HEK293 (cell line): ENCODE measurements at regions of chr22 and their contacts with region 1.

Region 1: DNA sequence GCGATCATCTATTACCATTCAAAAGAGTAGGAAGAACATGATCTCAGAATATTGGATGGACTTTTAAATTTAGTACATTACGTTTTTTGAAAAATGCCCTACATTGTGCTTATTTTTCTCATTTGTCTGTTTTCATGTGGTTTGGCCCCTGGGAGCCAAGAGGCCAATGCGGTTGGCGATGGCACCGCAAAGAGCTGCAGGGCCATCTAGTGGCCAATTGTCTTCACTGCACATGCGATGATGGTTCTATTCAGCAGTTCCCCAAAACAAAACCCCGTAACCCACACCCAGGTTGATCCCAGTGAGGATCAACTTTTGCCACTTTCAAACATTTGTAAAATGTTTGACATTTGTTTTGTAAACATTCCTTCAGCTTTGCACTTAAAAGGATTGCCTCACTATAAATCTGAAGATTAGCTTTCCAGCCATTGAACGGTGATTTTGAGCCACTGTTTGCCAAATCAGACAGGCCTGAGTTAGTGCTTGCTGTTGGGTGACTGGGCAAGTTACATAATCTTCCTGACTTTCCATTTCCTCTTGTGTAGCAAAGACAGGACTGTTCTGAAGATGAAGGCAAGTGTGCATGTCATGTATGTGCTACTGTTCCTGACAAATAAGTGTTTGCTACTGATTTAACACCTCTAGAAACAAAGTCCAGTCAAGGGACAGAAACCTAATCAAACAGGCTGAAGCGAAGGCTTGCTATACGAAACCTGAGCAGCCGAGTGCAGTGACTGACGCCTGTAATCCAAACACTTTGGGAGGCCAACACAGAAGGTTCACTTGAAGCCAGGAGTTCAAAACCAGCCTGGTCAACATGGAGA is 29.2 kb upstream of the XBP1 start:
- H3K4me3 ChIP-seq: no peak overlapping the region
- H3K27ac ChIP-seq: no peak overlapping the region
- H3K4me1 ChIP-seq: no peaks in the 10 kb centered on the region
- CTCF ChIP-seq: peak; percentile 87

Region 2: DNA sequence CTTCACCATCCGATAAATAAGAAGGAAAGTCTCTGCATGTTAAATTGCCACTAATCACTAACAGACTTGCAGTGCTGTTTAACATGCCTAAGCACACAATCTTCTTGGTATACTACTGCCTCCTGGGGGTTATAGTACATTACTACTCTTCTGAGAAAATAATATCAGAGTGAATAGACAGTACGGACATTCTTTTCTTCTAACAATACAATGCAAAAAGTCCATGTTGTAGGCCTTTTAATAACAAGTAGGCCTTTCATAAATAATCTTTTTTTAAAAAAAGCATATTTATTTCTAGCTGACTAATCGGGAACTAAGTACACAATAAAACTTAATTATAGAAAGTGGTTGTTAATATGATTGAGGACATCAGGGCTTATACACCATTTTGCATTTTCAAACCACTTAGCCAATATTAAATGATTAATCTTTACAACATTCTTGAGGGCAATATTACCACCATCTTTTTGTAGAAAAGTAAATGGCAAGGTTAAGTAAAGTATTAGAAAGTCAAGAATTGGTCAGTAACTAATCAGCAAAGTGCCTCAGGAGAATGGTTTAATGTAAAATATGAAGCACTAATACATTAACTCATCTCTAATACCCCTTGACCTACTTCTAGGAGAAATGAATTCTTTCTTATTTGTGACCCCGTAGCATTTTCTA is 234.6 kb before region 1 on chr22:
- CTCF ChIA-PET with region 1: interaction called, 131 read pairs
- POLR2A ChIA-PET with region 1: no interaction called
- H3K4me3 ChIP-seq: no peak overlapping the region
- H3K27ac ChIP-seq: no peak overlapping the region
- H3K4me1 ChIP-seq: peaks cover 5% of the 10 kb centered on the region
- CTCF ChIP-seq: peak; percentile 56; the same call in 1 of the 2 replicates

Region 3: DNA sequence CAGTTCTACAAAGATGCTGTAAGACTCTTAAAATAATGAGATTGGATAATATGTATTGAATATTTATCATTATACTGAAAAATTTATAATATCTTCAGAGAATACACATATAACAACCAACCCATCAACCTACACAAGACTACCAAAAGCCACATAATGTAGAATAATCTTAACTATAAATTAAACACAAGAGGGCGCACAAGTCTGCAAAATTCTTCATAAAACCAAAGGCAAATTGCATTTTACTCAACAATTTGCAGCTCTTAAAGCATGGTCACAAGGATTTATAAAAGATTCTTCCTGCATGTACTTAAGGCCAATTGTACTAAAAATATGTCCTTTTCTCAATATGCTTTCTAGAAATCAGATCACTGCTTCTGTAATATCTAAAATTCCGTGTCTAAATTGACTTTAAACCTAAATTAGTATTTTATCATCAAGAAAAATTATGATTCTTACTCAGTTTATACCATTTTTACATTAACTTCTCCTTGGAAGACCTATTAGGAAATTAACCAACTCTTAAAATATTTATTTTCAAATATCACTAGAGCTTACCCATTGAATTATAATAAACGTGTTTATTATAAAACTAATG is 228.9 kb before region 1 on chr22:
- CTCF ChIA-PET with region 1: interaction called, 131 read pairs
- POLR2A ChIA-PET with region 1: no interaction called
- H3K4me3 ChIP-seq: no peak overlapping the region
- H3K27ac ChIP-seq: no peak overlapping the region
- H3K4me1 ChIP-seq: no peaks in the 10 kb centered on the region
- CTCF ChIP-seq: no peak

Region 4: GRCh38 chr22:28607795-28608194 is 221.8 kb before region 1 on chr22:
- CTCF ChIA-PET with region 1: interaction called, 27 read pairs
- POLR2A ChIA-PET with region 1: no interaction called
- H3K4me3 ChIP-seq: no peak overlapping the region
- H3K27ac ChIP-seq: no peak overlapping the region
- H3K4me1 ChIP-seq: no peaks in the 10 kb centered on the region
- CTCF ChIP-seq: no peak

Region 5: GRCh38 chr22:28791841-28792490 is 37.6 kb before region 1 on chr22:
- CTCF ChIA-PET with region 1: interaction called, 21 read pairs
- POLR2A ChIA-PET with region 1: no interaction called
- H3K4me3 ChIP-seq: no peak overlapping the region
- H3K27ac ChIP-seq: peak overlapping the region; percentile 40; the same call in 1 of the 2 replicates
- H3K4me1 ChIP-seq: no peaks in the 10 kb centered on the region; the same call in 1 of the 2 replicates
- CTCF ChIP-seq: no peak

Region 6: DNA sequence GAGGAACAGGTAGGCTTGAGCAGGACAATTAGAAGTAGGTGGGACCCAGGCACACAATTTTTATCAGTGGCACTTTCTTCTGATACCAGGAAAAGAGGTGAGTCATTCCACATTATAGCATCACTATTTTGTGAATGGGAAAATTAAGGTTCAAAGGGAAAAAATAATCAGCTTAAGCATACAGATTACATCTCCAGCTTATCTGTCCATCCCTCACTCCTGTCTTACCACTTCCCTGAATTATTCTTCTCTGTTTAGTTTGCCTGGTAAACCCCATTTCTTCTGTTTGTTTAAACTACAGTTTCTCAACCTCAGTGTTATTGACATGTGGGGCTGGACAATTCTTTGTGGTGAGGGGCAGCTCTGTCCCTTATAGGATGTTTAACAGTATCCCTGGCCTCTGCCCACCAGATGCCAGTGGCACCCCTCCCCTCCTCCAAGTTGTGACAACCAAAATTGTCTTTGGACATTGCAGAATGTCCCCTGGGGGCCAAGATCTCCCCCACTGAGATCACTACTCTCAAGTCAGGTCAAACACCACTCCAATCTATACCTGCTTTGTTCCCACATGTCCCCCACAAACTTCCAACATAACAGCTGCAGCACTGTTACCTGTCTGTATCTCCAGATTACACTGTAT is 20.7 kb before region 1 on chr22:
- CTCF ChIA-PET with region 1: interaction called, 15 read pairs
- POLR2A ChIA-PET with region 1: interaction called, 3 read pairs
- H3K4me3 ChIP-seq: no peak overlapping the region
- H3K27ac ChIP-seq: no peak overlapping the region
- H3K4me1 ChIP-seq: no peaks in the 10 kb centered on the region
- CTCF ChIP-seq: no peak

Region 7: DNA sequence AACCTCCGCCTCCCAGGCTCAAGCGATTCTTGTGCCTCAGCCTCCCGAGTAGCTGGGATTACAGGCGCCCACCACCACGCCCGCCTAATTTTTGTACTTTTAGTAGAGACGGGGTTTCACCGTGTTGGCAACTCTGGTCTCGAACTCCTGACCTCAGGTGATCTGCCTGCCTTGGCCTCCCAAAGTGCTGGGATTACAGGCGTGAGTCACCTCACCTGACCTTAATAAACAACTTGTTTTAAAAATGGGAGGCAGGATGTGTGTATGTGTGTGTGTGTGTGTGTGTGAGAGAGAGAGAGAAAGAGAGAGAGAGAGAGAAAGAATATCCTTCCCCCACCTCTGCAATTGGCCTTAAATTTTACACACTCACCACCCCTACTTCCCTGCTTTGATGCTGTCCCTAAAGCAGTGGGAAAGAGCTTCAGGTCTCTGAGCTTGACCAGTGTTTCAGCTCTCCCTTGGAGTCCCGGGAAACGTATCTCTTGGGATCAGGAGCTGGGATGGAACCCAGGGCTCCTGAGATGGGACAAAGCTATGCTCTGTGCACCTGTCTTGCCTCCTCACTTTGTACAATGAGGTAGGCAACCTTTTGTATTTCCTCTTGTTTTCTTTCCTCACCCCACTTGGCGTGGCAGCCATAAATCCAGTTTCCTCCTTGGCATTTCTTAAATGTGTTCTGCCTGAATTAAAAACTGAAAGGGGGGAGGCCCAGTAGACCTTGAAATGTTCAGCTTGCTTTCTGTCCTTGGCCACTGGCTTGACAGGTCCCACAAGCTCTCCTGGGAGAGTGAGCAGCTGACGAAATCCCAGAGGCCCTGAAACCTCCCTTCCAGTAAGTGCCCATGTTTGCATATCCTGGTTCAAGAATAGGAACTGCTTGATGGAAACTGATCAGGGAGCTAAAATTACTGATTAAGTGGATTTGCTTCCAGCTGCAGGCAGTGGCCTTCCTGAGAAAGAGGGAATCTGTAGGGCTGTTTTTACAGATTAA is 11.4 kb before region 1 on chr22:
- CTCF ChIA-PET with region 1: interaction called, 23 read pairs
- POLR2A ChIA-PET with region 1: no interaction called
- H3K4me3 ChIP-seq: no peak overlapping the region
- H3K27ac ChIP-seq: no peak overlapping the region
- H3K4me1 ChIP-seq: peaks cover 4% of the 10 kb centered on the region
- CTCF ChIP-seq: no peak

Region 8: GRCh38 chr22:28869736-28870135 is 40.2 kb after region 1 on chr22:
- CTCF ChIA-PET with region 1: no interaction called
- POLR2A ChIA-PET with region 1: no interaction called
- H3K4me3 ChIP-seq: no peak overlapping the region
- H3K27ac ChIP-seq: no peak overlapping the region
- H3K4me1 ChIP-seq: no peaks in the 10 kb centered on the region
- CTCF ChIP-seq: no peak

Region 9: DNA sequence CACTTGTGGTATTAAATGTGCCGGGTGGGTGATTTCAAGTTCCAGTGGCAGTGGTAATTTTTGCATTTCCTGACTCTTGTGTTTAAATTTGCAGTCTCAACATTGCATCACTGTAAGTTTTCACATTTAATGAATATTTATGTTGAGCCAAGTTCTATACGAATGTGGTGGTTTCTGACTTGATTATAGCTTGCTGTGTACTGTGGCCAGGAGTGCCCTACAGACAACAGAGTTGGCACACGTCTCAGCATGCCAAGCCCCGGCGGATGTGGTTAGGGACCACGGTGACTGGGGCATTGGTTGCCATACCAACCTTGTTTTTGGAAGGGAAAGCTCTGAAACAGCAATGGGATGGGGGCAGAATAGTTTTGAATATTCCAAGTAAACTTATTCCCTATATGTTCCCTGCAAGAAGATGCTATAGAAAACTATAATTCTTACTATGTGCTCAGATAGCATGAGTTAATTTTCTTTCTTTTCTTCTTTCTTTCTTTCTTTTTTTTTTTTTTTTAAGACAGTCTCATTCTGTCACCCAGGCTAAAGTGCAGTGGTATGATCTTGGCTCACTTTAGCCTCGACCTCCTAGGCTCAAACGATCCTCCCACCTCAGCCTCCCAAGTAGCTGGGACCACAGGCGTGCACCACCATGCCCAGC is 69.8 kb after region 1 on chr22:
- CTCF ChIA-PET with region 1: no interaction called
- POLR2A ChIA-PET with region 1: no interaction called
- H3K4me3 ChIP-seq: no peak overlapping the region
- H3K27ac ChIP-seq: no peak overlapping the region
- H3K4me1 ChIP-seq: peaks cover 9% of the 10 kb centered on the region
- CTCF ChIP-seq: no peak